ENCODE measurements at regions of chr4 and their contacts with region 1.

Region 1: DNA sequence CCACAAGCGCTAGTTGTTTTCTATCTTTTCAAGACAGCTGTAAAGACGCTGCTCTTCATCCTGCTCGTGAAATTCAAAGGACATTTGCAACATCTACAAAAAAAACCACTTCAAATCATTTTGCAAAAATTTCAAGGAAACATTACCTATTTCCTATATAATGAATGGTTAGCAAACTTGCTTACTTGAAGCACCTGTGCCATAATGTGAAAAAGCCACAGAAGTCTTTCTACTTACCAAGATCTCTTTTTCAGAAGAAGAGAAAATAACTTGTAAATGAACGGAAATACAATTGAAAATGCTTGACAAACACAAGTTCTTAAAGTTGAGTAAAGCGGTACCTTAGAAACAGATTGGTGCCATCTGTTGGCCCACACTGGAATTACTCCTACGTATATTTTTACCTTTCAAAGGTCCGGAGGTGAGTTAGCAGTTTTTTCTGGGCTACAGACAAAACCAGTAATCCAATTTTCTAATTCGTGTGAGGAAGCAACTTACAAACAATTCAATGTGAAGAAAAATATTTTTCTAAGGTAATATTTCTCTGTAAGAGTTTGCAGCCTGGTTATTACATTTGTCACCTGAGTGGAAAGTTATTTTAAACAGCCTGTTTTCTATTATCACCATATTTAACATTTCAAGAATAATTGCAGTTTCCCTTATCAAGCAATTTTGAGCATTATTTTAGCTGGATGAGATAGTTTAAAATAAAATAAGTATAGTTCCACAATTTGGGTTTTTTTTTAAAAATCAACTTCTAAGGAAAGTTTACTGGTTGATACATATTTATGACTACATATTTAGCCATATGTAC is at the start of gene TLR6:
- DNase-seq: no peak
- ATAC-seq: peak; percentile 42
- H3K4me3 Mint-ChIP-seq: peak within 1 kb of the TSS; percentile 82
- H3K27ac Mint-ChIP-seq: peak within 1 kb of the TSS; percentile 94
- H3K4me1 Mint-ChIP-seq: peaks cover 58% of the 10 kb centered on the region
- H3K27me3 Mint-ChIP-seq: no peaks in the 10 kb centered on the region
- CTCF ChIP-seq: peak; percentile 40
- total RNA-seq, gene TLR6: 59.1 and 64.7 TPM in 2 replicates

Region 2: DNA sequence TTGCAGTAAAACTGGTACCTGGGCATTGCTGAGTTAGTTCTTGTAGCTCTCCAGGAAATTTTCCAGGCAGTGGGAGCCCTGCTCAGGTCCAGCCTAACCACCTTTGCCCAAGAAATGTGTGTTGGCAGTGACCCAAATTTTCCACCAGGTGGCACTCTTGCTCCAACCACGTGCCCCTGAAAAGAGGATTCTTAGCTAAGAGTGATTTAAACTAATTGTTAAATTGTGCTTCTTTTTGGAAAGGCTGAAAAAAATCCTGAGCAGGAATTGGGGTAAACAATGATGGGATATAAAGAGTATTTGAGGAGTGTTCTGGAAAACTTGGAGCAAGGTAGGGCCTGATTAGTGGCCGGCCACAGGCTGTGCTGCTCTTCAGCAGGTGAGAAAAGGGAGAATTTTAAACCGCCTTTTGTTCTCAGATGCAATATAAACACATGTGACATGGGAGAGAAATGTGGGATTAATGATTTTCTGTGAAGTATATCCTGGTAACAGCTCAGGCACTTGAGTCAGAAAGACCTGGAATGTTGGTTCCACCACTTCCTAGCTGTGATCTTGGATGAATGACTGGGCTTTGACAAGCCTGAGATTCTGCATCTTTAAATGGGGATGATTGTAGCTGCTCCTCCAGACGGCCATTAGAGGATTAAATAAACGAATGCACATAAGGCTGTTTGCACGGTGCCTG is 676.9 kb before region 1 on chr4:
- CTCF ChIA-PET with region 1: interaction called, 3 read pairs
- POLR2A ChIA-PET with region 1: no interaction called
- intact Hi-C with region 1: loop called (anchors 2 kb)
- DNase-seq: peak; percentile 54
- ATAC-seq: peak; percentile 75
- H3K4me3 Mint-ChIP-seq: no peak overlapping the region
- H3K27ac Mint-ChIP-seq: peak overlapping the region; percentile 15
- H3K4me1 Mint-ChIP-seq: peaks cover 28% of the 10 kb centered on the region
- H3K27me3 Mint-ChIP-seq: peaks cover 6% of the 10 kb centered on the region
- CTCF ChIP-seq: peak; percentile 96

Region 3: GRCh38 chr4:38601244-38601897 is 255.4 kb before region 1 on chr4:
- CTCF ChIA-PET with region 1: no interaction called
- POLR2A ChIA-PET with region 1: no interaction called
- intact Hi-C with region 1: no loop called
- DNase-seq: no peak
- ATAC-seq: no peak
- H3K4me3 Mint-ChIP-seq: no peak overlapping the region
- H3K27ac Mint-ChIP-seq: no peak overlapping the region
- H3K4me1 Mint-ChIP-seq: no peaks in the 10 kb centered on the region
- H3K27me3 Mint-ChIP-seq: no peaks in the 10 kb centered on the region
- CTCF ChIP-seq: no peak

Region 4: DNA sequence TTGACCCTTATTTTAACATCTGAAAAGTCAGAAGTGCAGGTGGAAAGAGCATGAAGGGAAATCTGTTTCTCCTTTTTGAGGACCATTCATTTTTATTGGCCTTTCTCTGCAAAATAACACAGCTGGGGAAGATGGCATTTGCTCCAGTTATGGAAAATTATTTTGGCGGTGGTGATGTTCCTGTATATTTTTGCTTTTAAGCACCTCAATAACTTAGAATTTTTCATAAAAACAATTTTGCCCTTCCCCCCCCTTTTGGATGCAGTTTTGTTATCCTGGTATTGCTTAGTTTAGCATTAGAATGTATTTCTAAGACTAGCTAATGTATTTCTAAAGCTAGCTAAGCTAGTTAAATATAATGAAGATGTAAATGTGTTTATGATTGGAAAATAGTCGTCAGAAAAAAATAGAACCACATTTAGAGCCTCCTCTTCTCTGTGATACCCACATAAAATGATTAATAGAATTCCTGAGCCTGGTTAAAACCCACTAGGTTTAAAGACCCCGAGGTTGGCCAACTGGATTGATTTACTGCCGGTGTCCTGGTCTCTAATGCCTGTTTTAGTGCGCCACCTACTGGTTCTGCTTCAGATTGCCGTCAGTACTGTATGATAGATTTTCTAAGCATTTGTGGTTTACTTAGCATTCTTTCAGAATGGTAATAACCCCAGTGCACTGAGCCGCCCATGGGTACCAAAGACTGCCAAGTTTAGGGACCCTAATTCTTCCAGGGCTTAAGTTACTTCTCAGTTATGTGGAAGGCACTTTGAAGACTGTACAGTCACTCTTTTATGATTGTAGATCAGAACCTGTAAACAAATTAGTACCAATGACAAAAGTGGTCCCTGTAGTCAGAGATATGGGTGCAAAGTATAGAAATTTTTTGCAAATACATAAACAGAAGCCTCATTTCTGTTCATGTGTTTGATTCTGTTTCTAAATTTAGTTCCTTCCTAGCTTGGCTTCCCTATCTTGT is 181.3 kb before region 1 on chr4:
- CTCF ChIA-PET with region 1: no interaction called
- POLR2A ChIA-PET with region 1: interaction called, 4 read pairs
- intact Hi-C with region 1: loop called (anchors 5 kb)
- DNase-seq: peak; percentile 56
- ATAC-seq: peak; percentile 75
- H3K4me3 Mint-ChIP-seq: peak overlapping the region; percentile 53
- H3K27ac Mint-ChIP-seq: peak overlapping the region; percentile 46
- H3K4me1 Mint-ChIP-seq: peaks cover 66% of the 10 kb centered on the region
- H3K27me3 Mint-ChIP-seq: no peaks in the 10 kb centered on the region
- CTCF ChIP-seq: peak; percentile 21

Region 5: DNA sequence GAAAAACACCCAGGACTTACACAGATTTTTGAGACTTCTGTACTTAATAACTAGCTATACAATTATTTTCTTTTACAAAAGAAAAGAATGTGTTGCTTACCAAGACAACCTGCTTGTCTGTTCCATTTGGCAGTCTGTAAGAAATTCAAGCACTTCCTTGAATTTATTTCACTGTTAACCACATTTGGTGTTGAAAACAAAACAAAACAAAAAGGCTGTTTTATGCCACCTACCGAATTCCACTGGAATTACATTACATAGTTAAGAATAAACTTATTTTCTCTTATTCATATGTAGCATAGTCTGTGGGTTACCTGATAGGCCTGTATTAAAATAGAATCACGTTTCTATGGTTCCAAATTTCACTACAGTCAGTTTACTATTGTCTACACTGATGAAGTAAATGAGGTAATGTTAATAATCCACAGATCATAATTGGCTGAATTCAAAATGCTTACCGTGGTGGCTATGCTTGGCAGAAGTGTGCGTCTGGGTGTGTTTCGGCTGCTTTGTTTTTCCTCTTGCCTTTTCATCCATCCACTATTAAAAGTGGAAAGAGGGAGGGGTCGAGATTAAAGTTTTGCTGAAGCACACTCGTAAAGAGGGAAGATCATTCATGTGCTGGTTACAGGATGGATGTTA is 52.0 kb before region 1 on chr4 and contains the start of gene TLR1:
- CTCF ChIA-PET with region 1: interaction called, 22 read pairs
- POLR2A ChIA-PET with region 1: interaction called, 88 read pairs
- intact Hi-C with region 1: loop called (anchors 1 kb)
- DNase-seq: no peak
- ATAC-seq: peak; percentile 45
- H3K4me3 Mint-ChIP-seq: peak within 1 kb of the TSS; percentile 86
- H3K27ac Mint-ChIP-seq: peak within 1 kb of the TSS; percentile 93
- H3K4me1 Mint-ChIP-seq: peaks cover 68% of the 10 kb centered on the region
- H3K27me3 Mint-ChIP-seq: no peaks in the 10 kb centered on the region
- CTCF ChIP-seq: peak; percentile 54
- total RNA-seq, gene TLR1: 39.6 and 43.0 TPM in 2 replicates

Region 6: DNA sequence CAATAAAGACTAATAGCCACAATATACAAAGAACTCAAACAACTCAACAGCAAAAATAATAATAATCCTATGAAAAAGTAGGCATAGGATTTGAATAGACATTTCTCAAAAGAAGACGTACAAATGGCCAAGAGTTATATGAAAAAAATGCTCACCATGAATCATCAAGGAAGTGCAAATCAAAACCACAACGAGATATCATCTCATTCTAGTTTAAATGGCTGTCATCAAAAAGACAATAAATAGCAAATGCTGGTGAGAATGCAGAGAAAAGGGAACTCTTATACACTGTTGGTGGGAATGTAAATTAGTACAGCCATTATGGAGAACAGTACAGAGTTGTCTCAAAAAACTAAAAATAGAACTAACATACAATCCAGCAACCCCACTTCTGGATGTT is 18.9 kb before region 1 on chr4:
- CTCF ChIA-PET with region 1: interaction called, 3 read pairs
- POLR2A ChIA-PET with region 1: interaction called, 4 read pairs
- intact Hi-C with region 1: loop called (anchors 2 kb)
- DNase-seq: no peak
- ATAC-seq: peak; percentile 40
- H3K4me3 Mint-ChIP-seq: peak overlapping the region; percentile 21
- H3K27ac Mint-ChIP-seq: peak overlapping the region; percentile 60
- H3K4me1 Mint-ChIP-seq: peaks cover 46% of the 10 kb centered on the region
- H3K27me3 Mint-ChIP-seq: no peaks in the 10 kb centered on the region
- CTCF ChIP-seq: no peak

Region 7: GRCh38 chr4:39032218-39033085 is 175.7 kb after region 1 on chr4 and contains the start of gene TMEM156:
- CTCF ChIA-PET with region 1: no interaction called
- POLR2A ChIA-PET with region 1: interaction called, 8 read pairs
- intact Hi-C with region 1: loop called (anchors 5 kb)
- DNase-seq: no peak
- ATAC-seq: peak; percentile 69
- H3K4me3 Mint-ChIP-seq: peak within 1 kb of the TSS; percentile 83
- H3K27ac Mint-ChIP-seq: peak within 1 kb of the TSS; percentile 93
- H3K4me1 Mint-ChIP-seq: peaks cover 64% of the 10 kb centered on the region
- H3K27me3 Mint-ChIP-seq: no peaks in the 10 kb centered on the region
- CTCF ChIP-seq: no peak
- total RNA-seq, gene TMEM156: 26.0 and 29.5 TPM in 2 replicates

Measured in activated B cell treated with CpG ODN at 0.5 μM for 24 hours (primary cell).